Activated T-helper 2 cell treated with anti-CD3 and anti-CD28 coated beads, Interferon-gamma antibody, Interleukin-2, Interleukin-4, amounts not matched to agents 10 μg/mL and 5 μg/mL and 100 μg/mL, durations not matched to agents 14 hours and 24 hours and 36 hours (primary cell): ENCODE measurements at regions of chr15 and their contacts with region 1.

Region 1: DNA sequence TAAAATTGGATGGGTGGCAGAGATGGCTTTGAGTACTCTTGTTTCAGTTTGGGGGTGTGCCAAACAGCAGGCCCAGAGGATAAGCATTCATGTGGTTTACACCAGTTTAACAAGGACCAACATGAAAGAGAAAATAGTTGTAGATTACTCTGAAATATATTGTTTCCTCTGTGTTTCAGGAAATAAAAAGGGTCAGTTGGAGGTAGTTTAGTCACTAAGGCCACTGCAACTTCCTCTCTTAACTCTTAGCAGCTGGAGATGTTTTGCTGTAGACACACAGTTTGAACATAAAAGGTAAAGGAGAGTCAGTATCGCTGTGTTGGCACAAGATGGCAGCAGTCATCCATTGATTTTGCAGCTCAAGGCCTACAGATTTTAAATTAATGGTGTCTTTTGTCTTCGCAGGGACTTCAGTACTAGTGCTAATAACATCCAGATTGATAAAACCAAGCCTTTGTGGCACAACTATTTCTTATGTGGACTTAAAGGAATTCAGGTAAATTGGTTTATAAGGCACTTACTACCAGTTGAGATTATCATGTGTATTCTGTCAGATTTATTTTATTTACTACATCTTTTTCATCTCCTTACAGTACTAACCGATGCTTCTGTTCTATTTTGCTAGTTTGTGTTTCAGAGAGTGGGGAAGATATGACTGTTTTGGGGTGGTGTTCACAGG is 65.5 kb downstream of the GALK2 start:
- DNase-seq: peak; percentile 42
- H3K4me3 Mint-ChIP-seq: no peak overlapping the region
- H3K27ac Mint-ChIP-seq: peak overlapping the region; percentile 14
- H3K4me1 Mint-ChIP-seq: peaks cover 20% of the 10 kb centered on the region
- H3K27me3 Mint-ChIP-seq: no peaks in the 10 kb centered on the region

Region 2: DNA sequence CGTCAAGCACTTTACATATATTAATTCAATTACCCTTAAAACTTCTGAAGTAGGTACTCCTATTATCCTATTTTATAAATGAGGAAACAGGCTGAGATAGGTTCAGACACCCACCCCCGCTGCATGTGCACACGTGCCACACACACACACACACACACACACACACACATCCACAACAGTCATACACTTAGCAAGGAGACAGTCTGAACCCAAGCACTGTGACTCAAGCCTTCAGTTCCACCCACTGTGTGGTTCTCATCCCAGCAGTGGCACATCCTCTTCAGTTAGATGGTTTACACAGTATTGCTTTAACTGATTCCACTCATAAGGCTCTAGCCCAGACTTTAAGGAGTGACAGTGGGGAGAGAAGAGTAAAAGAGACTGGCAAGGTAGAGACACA is 96.4 kb after region 1 on chr15:
- intact Hi-C with region 1: loop called (anchors 5 kb)
- DNase-seq: no peak
- H3K4me3 Mint-ChIP-seq: no peak overlapping the region
- H3K27ac Mint-ChIP-seq: no peak overlapping the region
- H3K4me1 Mint-ChIP-seq: peaks cover 3% of the 10 kb centered on the region
- H3K27me3 Mint-ChIP-seq: no peaks in the 10 kb centered on the region

Region 3: DNA sequence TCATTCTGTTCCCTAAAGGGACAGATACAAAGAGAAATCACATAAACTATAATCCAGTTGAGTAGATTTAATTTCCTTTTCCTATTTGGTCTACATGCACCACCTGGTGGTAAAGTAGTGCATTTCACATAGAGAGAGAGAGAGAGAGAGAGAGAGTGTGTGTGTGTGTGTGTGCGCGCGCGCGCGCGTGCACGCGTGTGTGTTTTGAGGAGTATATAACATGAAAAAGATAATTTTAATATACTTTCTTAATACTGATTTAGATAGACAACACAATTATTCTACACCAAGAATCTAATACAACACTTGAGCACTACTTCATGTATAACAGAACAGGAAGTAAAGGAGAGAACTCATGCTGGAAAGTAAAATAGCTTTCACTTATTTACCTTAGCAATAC is 186.4 kb after region 1 on chr15:
- intact Hi-C with region 1: loop called (anchors 1 kb)
- DNase-seq: no peak
- H3K4me3 Mint-ChIP-seq: no peak overlapping the region
- H3K27ac Mint-ChIP-seq: peak overlapping the region; percentile 0
- H3K4me1 Mint-ChIP-seq: peaks cover 4% of the 10 kb centered on the region
- H3K27me3 Mint-ChIP-seq: peaks cover 17% of the 10 kb centered on the region

Region 4: DNA sequence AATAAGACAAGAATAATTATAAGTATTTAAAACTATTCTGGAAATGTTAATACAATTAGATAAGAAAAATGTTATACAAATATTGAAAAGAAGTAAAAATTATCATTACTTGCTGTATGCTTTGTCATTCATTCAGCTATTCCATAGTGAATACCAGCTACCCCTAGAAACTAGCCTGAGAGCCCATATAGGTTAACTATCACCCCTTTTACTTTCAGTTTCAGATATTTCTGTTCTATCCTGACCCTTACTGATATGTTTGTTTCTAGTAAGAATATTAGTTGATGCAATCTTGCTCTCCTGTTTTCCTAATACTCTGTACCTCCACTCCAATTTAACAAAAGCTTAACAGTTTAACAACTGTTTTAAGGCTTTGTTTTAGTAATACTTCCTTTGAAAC is 353.4 kb after region 1 on chr15:
- intact Hi-C with region 1: no loop called
- DNase-seq: no peak
- H3K4me3 Mint-ChIP-seq: no peak overlapping the region
- H3K27ac Mint-ChIP-seq: no peak overlapping the region
- H3K4me1 Mint-ChIP-seq: peaks cover 2% of the 10 kb centered on the region
- H3K27me3 Mint-ChIP-seq: no peaks in the 10 kb centered on the region

Region 5: GRCh38 chr15:50051803-50052419 is 816.3 kb after region 1 on chr15:
- intact Hi-C with region 1: loop called (anchors 10 kb)
- DNase-seq: no peak
- H3K4me3 Mint-ChIP-seq: no peak overlapping the region
- H3K27ac Mint-ChIP-seq: peak overlapping the region; percentile 8
- H3K4me1 Mint-ChIP-seq: peaks cover 57% of the 10 kb centered on the region
- H3K27me3 Mint-ChIP-seq: no peaks in the 10 kb centered on the region